Dendritic cell treated with granulocyte-macrophage colony-stimulating factor and Interleukin-4, amounts not matched to agents 40 ng/mL and 50 ng/mL, for 4 days (primary cell): ENCODE measurements at regions of chr21 and their contacts with region 1.

Region 1: DNA sequence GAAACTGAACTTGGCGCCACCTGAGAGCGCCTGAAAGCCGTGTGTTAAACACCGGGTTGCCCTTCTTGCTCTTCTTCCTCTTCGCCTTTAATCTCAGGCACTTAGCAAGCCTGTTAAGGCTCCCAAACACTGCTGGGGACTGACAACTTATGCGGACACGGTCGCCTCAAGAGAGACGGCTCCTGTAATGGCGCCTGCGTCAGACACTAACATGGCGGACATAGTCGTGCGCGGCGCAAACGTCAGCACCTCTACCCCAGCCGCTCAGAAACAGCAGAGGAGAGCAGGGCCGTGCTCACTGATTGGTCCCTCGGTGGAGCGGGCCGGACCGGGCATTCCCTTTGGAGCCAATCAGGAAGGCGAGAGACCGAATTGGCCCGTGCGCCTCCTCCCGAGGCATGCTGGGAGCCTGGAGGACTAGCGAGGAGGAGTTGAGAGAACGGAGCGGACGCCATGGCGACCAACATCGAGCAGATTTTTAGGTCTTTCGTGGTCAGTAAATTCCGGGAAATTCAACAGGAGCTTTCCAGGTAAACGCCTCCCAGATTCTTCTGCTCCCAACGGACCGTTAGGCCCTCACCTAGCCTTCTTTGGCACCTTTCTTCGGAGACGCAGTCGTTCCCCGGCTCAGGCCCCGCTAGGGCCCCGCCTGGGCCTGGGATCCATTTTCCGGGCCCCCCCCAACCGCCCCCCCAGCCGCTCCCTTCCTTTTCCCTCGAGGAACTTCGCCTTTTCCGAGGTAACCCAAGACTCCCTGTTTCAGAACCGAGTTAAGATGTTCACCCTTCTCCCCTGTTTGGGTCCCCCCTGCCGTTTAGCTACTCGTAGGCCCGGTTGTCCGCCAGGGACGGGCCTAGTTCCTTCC is at the start of gene SON:
- H3K4me3 Mint-ChIP-seq: peak within 1 kb of the TSS; percentile 90
- H3K27ac Mint-ChIP-seq: peak within 1 kb of the TSS; percentile 99
- H3K4me1 Mint-ChIP-seq: peaks cover 24% of the 10 kb centered on the region
- H3K27me3 Mint-ChIP-seq: no peaks in the 10 kb centered on the region

Region 2: GRCh38 chr21:33491373-33492102 is 51.3 kb before region 1 on chr21 and contains the start of gene DNAJC28:
- intact Hi-C with region 1: loop called (anchors 5 kb)
- H3K4me3 Mint-ChIP-seq: peak within 1 kb of the TSS; percentile 82
- H3K27ac Mint-ChIP-seq: peak within 1 kb of the TSS; percentile 90
- H3K4me1 Mint-ChIP-seq: no peaks in the 10 kb centered on the region
- H3K27me3 Mint-ChIP-seq: peaks cover 2% of the 10 kb centered on the region

Region 3: GRCh38 chr21:33552999-33553598 is 10.2 kb after region 1 on chr21:
- intact Hi-C with region 1: no loop called
- H3K4me3 Mint-ChIP-seq: no peak overlapping the region
- H3K27ac Mint-ChIP-seq: no peak overlapping the region
- H3K4me1 Mint-ChIP-seq: peaks cover 21% of the 10 kb centered on the region
- H3K27me3 Mint-ChIP-seq: no peaks in the 10 kb centered on the region

Region 4: GRCh38 chr21:33588485-33589335 is 45.8 kb after region 1 on chr21 and contains the start of gene DONSON:
- intact Hi-C with region 1: loop called (anchors 2 kb)
- H3K4me3 Mint-ChIP-seq: peak within 1 kb of the TSS; percentile 89
- H3K27ac Mint-ChIP-seq: peak within 1 kb of the TSS; percentile 87
- H3K4me1 Mint-ChIP-seq: peaks cover 10% of the 10 kb centered on the region
- H3K27me3 Mint-ChIP-seq: peaks cover 2% of the 10 kb centered on the region